Sciatic nerve (tissue), 2 donors: ENCODE measurements at regions of chr7 and their contacts with region 1.

Region 1: DNA sequence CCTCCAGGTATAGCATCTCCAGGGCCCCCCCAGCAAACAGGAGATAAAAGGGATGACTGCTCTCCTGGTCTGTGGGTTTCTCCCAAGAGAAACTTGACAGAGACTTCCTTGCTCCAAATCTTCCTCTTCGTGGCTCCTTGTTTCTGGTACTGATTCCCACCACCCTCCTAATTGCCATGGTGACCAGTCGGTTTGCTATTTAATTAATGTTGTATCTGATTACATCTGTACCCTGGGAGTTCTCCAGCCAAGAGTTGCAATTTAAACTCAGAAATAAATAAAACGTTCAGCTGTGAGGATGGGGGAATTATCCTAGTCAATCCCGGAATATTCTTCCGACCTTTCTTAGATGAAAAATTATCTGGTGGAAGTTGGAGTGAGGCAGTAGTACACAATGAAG is 264.7 kb downstream of the PAXIP1 start:
- DNase-seq: no peak
- ATAC-seq: no peak

Region 2: GRCh38 chr7:153912211-153912610 is 826.0 kb before region 1 on chr7:
- intact Hi-C with region 1: loop called (anchors 5 kb)
- DNase-seq: no peak
- ATAC-seq: no peak

Region 3: GRCh38 chr7:154767142-154767541 is 28.9 kb after region 1 on chr7:
- intact Hi-C with region 1: no loop called
- DNase-seq: no peak
- ATAC-seq: no peak

Region 4: GRCh38 chr7:154812027-154812426 is 73.8 kb after region 1 on chr7:
- intact Hi-C with region 1: no loop called
- DNase-seq: no peak
- ATAC-seq: no peak